Ascending aorta (tissue), 2 donors: ENCODE measurements at regions of chr3 and their contacts with region 1.

Region 1: DNA sequence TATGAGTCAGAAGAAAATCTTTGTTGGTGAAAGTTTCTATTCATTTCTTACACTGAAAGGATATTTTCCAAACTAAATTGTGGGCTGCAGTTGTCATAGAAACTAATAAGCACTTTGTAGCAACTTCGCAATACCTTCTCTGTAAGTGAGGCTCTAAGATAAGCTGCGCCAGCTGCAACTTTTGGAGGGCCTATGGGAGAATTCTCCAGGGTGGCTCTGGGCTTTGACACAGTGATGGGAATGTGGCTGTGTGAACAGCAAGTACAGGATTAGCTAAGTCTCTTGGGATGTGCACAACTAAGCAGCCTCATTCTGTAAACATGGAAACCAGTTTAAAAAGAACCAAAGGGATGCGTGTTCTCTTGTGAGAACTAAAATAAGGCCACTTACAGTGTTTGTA is 124.6 kb upstream of the SGO1 start:
- DNase-seq: peak; percentile 36 to 90
- H3K4me3 ChIP-seq: no peak overlapping the region
- H3K27ac ChIP-seq: peak overlapping the region; percentile 39 to 51
- H3K4me1 ChIP-seq: no peaks in the 10 kb centered on the region
- H3K27me3 ChIP-seq: no peaks in the 10 kb centered on the region
- CTCF ChIP-seq: no peak

Region 2: DNA sequence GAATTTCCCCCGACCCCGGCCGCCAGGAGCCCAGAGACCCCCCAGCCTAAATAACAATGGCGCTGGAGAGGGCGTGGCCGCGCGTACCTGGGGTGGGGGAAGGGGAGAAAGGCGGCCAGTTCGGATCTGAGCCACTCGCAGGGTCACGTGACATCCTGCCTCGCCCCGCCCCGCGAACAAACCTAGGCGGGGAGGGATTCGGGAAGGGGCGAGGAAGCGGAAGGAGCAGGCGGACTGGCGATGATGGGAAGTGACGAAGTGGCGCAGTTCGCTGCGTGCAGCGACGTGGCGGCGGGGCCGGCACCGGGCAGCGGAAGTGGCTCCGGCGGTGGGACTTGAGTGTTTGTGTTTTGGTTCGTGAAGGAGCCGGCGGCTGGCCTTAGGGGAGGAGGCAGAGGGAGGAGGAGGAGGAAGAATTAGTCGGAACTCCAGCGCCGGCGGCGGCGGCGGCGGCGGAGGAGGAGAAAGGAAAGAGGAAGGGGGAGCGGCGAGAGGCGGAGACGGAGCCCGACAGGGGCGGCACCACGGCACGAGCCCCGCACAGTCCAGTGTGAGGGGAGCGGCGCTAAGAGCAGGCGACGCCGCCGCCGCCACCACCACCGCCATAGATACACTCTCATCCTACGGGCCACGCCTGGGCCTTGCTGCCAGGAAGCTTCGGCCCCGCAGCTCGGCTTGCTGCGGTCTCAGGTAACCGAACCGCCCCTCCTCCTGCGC is 363.6 kb before region 1 on chr3 and contains the start of gene RAB5A:
- intact Hi-C with region 1: loop called (anchors 5 kb)
- DNase-seq: peak; percentile 95 to 99
- H3K4me3 ChIP-seq: peak within 1 kb of the TSS; percentile 94 to 99
- H3K27ac ChIP-seq: peak within 1 kb of the TSS; percentile 100
- H3K4me1 ChIP-seq: peaks cover 10 to 21% of the 10 kb centered on the region in 2 donors
- H3K27me3 ChIP-seq: no peaks in the 10 kb centered on the region
- CTCF ChIP-seq: no peak
- total RNA-seq, gene RAB5A: 54.9 TPM

Region 3: GRCh38 chr3:20185701-20186598 is 124.7 kb before region 1 on chr3 and contains the start of gene SGO1:
- intact Hi-C with region 1: loop called (anchors 2 kb)
- DNase-seq: peak; percentile 99 to 100
- H3K4me3 ChIP-seq: peak within 1 kb of the TSS; percentile 70 to 85
- H3K27ac ChIP-seq: peak within 1 kb of the TSS; percentile 91 to 94
- H3K4me1 ChIP-seq: peaks cover 0 to 6% of the 10 kb centered on the region in 2 donors
- H3K27me3 ChIP-seq: no peaks in the 10 kb centered on the region
- CTCF ChIP-seq: no peak
- total RNA-seq, gene SGO1: not detected

Region 4: DNA sequence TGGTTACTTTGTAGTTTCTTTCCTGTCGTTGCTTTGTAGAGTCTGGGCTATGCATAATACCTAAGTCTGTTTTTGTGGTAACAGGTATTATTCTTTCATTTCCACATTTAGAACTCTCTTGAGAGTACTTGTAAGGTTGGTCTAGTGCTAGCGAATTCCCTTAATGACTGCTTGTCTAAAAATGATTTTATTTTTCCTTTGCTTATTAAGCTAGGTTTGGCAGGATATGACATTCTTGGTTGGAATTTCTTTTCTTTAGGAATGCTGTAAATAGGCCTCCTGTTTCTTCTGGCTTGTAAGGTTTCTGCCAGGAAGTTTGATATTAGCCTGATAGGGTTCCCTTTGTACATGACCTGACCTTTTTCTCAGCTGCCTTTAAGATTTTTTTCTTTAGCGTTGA is 54.5 kb before region 1 on chr3:
- intact Hi-C with region 1: loop called (anchors 2 kb)
- DNase-seq: no peak
- H3K4me3 ChIP-seq: no peak overlapping the region
- H3K27ac ChIP-seq: peak overlapping the region; percentile 41 to 43
- H3K4me1 ChIP-seq: peaks cover 0 to 5% of the 10 kb centered on the region in 2 donors
- H3K27me3 ChIP-seq: no peaks in the 10 kb centered on the region
- CTCF ChIP-seq: no peak

Region 5: DNA sequence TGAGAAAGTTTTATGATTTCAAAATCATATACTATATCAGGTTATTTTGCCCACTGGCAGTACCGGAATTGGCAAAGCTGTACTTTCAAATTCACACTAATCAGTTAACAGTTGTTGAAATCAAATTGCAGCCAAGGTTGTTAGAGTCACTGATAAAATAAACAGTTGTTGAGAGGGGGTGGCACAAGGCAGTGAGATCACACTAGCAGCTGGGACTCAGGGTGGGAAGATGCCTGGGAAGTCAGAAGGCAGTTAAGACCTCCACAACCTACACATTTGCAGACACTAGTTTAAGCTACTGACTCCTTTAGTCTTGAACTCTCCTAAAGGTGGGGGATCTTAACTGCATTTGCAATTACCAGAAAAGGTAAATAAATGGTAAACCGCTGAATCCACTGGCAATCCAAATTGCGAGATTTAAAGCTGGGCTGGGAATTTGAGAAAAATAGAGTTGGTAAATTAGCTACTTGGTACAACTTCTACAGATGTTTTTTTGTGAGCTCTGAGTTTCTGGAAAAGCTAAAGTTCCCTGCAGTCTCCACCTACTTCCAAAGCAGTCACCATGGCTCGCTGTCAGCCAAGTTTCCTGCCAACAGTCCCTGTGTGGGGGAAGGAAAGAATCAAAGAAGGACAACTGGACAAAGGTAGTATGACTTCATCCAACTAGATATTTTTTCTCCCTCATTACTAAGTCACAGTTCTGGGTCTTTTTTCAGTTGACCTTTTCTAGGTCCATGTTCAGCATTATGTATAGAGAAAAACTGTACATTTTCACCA is 1334.7 kb after region 1 on chr3:
- intact Hi-C with region 1: loop called (anchors 10 kb)
- DNase-seq: peak; percentile 31 to 86
- H3K4me3 ChIP-seq: peak overlapping the region in 1 of 2 donors; percentile 43
- H3K27ac ChIP-seq: peak overlapping the region; percentile 80 to 85
- H3K4me1 ChIP-seq: peaks cover 2 to 17% of the 10 kb centered on the region in 2 donors
- H3K27me3 ChIP-seq: no peaks in the 10 kb centered on the region
- CTCF ChIP-seq: no peak

Region 6: GRCh38 chr3:21779909-21780308 is 1469.3 kb after region 1 on chr3:
- intact Hi-C with region 1: loop called (anchors 10 kb)
- DNase-seq: no peak
- H3K4me3 ChIP-seq: no peak overlapping the region
- H3K27ac ChIP-seq: peak overlapping the region; percentile 75 to 84
- H3K4me1 ChIP-seq: peaks cover 0 to 53% of the 10 kb centered on the region in 2 donors
- H3K27me3 ChIP-seq: no peaks in the 10 kb centered on the region
- CTCF ChIP-seq: no peak